ENCODE measurements at regions of chrX and their contacts with region 1.

Region 1: DNA sequence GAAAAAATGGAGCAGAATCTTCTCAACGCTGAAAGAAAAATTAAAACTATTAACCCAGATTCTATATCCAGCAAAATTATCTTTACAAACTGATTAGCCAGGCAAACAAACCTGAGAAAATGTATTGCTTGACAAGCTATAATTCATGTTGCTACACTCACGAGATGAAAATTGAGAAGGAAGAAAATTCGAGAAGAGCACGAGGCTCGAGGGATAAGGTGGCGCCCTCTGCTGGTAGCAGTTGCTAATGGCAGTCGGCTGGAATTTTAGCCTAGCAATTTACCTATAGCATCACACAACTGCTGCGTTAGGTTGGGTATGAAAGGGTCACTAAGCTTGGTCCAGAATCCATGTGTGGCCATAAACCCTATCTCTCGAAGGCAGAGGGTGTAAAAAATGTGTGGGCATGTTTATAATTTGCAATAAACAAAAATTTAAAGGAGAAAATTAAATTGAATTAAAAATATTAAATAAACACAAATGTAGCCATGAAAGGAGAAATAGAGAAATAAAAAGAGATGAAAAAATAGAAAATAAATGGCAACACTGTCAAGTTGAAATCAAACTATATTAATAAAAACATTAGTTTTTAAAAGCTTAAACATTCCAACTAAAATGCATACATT is 126.6 kb downstream of the PPP4R3C start:
- DNase-seq: no peak
- ATAC-seq: peak; percentile 73
- H3K4me3 ChIP-seq: no peak overlapping the region
- H3K27ac ChIP-seq: no peak overlapping the region
- H3K4me1 ChIP-seq: no peaks in the 10 kb centered on the region
- H3K27me3 ChIP-seq: no peaks in the 10 kb centered on the region
- CTCF ChIP-seq: peak; percentile 67 to 90 (median 87)
- EP300 ChIP-seq: no peak
- POLR2A ChIP-seq: no peak
- RAD21 ChIP-seq: peak; percentile 43

Region 2: GRCh38 chrX:27350476-27350875 is 13.9 kb after region 1 on chrX:
- CTCF ChIA-PET with region 1: interaction called, 10 read pairs
- POLR2A ChIA-PET with region 1: no interaction called
- RAD21 ChIA-PET with region 1: interaction called, 4 read pairs
- SMC1A ChIA-PET with region 1: no interaction called
- in situ Hi-C with region 1: no loop called
- intact Hi-C with region 1: no loop called
- DNase-seq: no peak
- ATAC-seq: no peak
- H3K4me3 ChIP-seq: no peak overlapping the region
- H3K27ac ChIP-seq: no peak overlapping the region
- H3K4me1 ChIP-seq: no peaks in the 10 kb centered on the region
- H3K27me3 ChIP-seq: no peaks in the 10 kb centered on the region
- CTCF ChIP-seq: no peak
- EP300 ChIP-seq: no peak
- POLR2A ChIP-seq: no peak
- RAD21 ChIP-seq: no peak